Head of caudate nucleus (tissue), 42 donors: ENCODE measurements at regions of chr11 and their contacts with region 1.

Region 1: GRCh38 chr11:72026090-72026489 is 27.4 kb downstream of the IL18BP start:
- DNase-seq: no peak

Region 2: DNA sequence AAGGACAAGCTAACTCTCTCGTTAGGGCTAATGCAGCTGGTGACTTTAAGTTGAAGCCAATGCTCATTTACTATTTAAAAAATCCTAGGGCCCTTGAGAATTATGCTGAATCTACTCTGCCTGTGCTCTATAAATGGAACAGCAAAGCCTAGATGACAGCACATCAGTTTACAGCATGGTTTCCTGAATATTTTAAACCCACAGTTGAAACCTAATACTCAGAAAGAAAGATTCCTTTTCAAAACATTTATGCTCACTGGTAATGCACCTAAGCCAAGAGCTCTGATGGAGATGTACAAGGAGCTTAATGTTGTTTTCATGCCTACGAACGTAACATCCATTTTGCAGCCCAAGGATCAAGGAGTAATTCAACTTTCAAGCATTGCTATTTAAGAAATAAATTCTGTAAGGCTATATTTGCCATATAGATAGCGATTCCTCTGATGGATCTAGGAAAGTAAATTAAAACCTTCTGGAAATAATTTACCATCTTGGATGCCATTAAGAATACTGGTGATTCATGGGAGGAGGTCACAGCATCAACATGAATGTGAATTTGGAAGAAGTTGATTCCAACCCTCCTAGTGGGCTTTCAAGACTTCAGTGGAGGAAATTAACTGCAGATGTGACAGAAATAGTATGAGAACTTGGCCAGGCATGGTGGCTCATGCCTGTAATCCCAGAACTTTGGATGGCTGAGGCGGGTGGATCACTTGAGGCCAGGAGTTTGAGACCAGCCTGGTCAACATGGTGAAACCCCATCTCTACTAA is 112.1 kb before region 1 on chr11:
- intact Hi-C with region 1: no loop called
- DNase-seq: no peak

Region 3: GRCh38 chr11:71991494-71991893 is 34.6 kb before region 1 on chr11:
- intact Hi-C with region 1: no loop called
- DNase-seq: no peak

Region 4: GRCh38 chr11:72091005-72091691 is 65.1 kb after region 1 on chr11:
- intact Hi-C with region 1: loop called (anchors 5 kb)
- DNase-seq: peak; percentile 47 to 91 (median 76)

Region 5: DNA sequence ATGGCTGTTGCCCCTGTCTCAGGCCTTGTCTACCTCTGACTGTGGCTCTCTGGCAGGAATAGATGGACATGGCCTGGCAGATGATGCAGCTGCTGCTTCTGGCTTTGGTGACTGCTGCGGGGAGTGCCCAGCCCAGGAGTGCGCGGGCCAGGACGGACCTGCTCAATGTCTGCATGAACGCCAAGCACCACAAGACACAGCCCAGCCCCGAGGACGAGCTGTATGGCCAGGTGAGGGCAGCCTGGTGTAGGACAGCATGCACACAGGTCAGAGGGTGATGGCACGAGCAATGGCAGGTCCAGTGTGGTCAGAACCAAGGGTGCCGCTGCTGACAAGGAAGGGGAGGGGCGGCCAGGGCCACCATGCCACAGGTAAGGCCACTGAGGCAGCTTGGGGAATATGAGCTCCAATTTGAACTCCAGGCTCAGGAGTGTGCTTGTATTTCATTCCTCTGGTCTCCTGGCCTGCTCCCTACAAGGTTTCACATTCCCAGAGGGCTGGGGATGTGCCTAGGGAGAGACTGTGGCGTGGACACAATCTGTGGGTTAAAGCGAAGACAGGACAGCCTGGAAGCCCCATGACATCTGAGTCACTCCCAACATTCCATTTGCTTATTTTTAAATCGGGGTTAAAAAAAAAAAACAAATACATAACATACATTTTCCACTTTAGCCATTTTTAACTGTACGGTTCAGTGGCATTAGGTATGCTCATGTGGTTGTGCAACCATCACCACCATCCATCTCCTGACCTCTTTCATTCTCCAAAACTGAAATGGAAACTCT is 110.0 kb after region 1 on chr11:
- intact Hi-C with region 1: no loop called
- DNase-seq: no peak

Region 6: GRCh38 chr11:72238040-72238450 is 212.0 kb after region 1 on chr11:
- intact Hi-C with region 1: no loop called
- DNase-seq: peak in 26 of 42 donors; percentile 35 to 78 (median 52)